ENCODE measurements at regions of chr10 and their contacts with region 1.

Region 1: GRCh38 chr10:54402576-54402975 is 398.5 kb downstream of the PCDH15 start:
- DNase-seq: peak in 1 of 2 experiments; percentile 59
- H3K4me3 ChIP-seq: no peak overlapping the region
- H3K4me3 Mint-ChIP-seq: no peak overlapping the region
- H3K27ac Mint-ChIP-seq: no peak overlapping the region
- H3K4me1 ChIP-seq: no peaks in the 10 kb centered on the region
- H3K4me1 Mint-ChIP-seq: no peaks in the 10 kb centered on the region
- H3K27me3 ChIP-seq: no peaks in the 10 kb centered on the region
- H3K27me3 Mint-ChIP-seq: peaks cover 4% of the 10 kb centered on the region
- CTCF ChIP-seq: peak; percentile 80 to 89

Region 2: DNA sequence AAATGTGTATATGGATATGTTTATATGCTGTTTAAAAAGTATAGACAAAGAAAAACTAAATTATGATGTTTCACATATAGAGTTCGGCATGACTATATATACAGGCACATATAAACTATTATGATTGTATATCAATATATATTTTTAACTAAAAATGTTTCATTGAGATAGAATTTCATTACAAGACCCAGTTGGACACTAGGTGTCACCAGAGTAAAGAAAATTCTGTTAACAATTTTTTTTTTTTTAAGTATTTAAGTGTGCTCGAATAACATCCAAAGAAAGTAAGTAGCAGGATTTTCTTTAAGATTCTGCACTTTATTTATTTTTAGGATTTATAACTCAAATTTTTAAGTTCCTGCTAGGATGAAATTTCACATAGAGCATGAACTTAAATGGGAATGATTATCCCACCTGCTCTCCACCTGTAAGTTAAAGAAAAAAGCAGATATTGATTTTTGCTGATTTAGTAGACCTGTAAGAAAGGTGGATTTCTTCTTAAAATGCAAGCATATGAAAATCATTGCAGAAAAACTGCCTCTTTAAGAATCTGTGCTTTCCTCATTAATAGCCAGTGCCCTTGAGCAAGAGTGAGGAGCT is 563.0 kb before region 1 on chr10:
- CTCF ChIA-PET with region 1: interaction called, 3 read pairs
- POLR2A ChIA-PET with region 1: no interaction called
- intact Hi-C with region 1: loop called (anchors 1 kb)
- DNase-seq: peak in 1 of 2 experiments; percentile 47
- H3K4me3 ChIP-seq: no peak overlapping the region
- H3K4me3 Mint-ChIP-seq: no peak overlapping the region
- H3K27ac Mint-ChIP-seq: no peak overlapping the region
- H3K4me1 ChIP-seq: no peaks in the 10 kb centered on the region
- H3K4me1 Mint-ChIP-seq: no peaks in the 10 kb centered on the region
- H3K27me3 ChIP-seq: no peaks in the 10 kb centered on the region
- H3K27me3 Mint-ChIP-seq: no peaks in the 10 kb centered on the region
- CTCF ChIP-seq: peak; percentile 54 to 65

Region 3: GRCh38 chr10:54133203-54133602 is 269.4 kb before region 1 on chr10:
- CTCF ChIA-PET with region 1: no interaction called
- POLR2A ChIA-PET with region 1: no interaction called
- intact Hi-C with region 1: loop called (anchors 1 kb)
- DNase-seq: no peak
- H3K4me3 ChIP-seq: no peak overlapping the region
- H3K4me3 Mint-ChIP-seq: no peak overlapping the region
- H3K27ac Mint-ChIP-seq: no peak overlapping the region
- H3K4me1 ChIP-seq: no peaks in the 10 kb centered on the region
- H3K4me1 Mint-ChIP-seq: no peaks in the 10 kb centered on the region
- H3K27me3 ChIP-seq: no peaks in the 10 kb centered on the region
- H3K27me3 Mint-ChIP-seq: no peaks in the 10 kb centered on the region
- CTCF ChIP-seq: peak; percentile 45 to 49

Region 4: GRCh38 chr10:54234832-54235231 is 167.7 kb before region 1 on chr10:
- CTCF ChIA-PET with region 1: no interaction called
- POLR2A ChIA-PET with region 1: no interaction called
- intact Hi-C with region 1: no loop called
- DNase-seq: no peak
- H3K4me3 ChIP-seq: no peak overlapping the region
- H3K4me3 Mint-ChIP-seq: no peak overlapping the region
- H3K27ac Mint-ChIP-seq: no peak overlapping the region
- H3K4me1 ChIP-seq: no peaks in the 10 kb centered on the region
- H3K4me1 Mint-ChIP-seq: no peaks in the 10 kb centered on the region
- H3K27me3 ChIP-seq: no peaks in the 10 kb centered on the region
- H3K27me3 Mint-ChIP-seq: no peaks in the 10 kb centered on the region
- CTCF ChIP-seq: no peak